Posterior vena cava (tissue), 2 donors: ENCODE measurements at regions of chr1 and their contacts with region 1.

Region 1: GRCh38 chr1:8858888-8859706 is 19.4 kb downstream of the ENO1 start:
- DNase-seq: no peak

Region 2: GRCh38 chr1:8580566-8580965 is 278.5 kb before region 1 on chr1:
- intact Hi-C with region 1: no loop called
- DNase-seq: no peak

Region 3: GRCh38 chr1:8873506-8874229 is 14.6 kb after region 1 on chr1:
- intact Hi-C with region 1: loop called (anchors 2 kb)
- DNase-seq: peak; percentile 94

Region 4: GRCh38 chr1:8905582-8906191 is 46.6 kb after region 1 on chr1:
- intact Hi-C with region 1: loop called in 1 of 2 experiments (anchors 1 kb)
- DNase-seq: no peak